AG04449 (cell line): ENCODE measurements at regions of chr12 and their contacts with region 1.

Region 1: GRCh38 chr12:6620137-6620884 is 13.1 kb upstream of the CHD4 start:
- DNase-seq: no peak
- H3K4me3 ChIP-seq: peak overlapping the region; percentile 18; the same call in 1 of the 2 replicates
- CTCF ChIP-seq: peak; percentile 73

Region 2: GRCh38 chr12:6632026-6632983 is 12.0 kb after region 1 on chr12:
- CTCF ChIA-PET with region 1: interaction called, 34 read pairs
- POLR2A ChIA-PET with region 1: no interaction called
- DNase-seq: no peak
- H3K4me3 ChIP-seq: no peak overlapping the region
- CTCF ChIP-seq: no peak

Region 3: DNA sequence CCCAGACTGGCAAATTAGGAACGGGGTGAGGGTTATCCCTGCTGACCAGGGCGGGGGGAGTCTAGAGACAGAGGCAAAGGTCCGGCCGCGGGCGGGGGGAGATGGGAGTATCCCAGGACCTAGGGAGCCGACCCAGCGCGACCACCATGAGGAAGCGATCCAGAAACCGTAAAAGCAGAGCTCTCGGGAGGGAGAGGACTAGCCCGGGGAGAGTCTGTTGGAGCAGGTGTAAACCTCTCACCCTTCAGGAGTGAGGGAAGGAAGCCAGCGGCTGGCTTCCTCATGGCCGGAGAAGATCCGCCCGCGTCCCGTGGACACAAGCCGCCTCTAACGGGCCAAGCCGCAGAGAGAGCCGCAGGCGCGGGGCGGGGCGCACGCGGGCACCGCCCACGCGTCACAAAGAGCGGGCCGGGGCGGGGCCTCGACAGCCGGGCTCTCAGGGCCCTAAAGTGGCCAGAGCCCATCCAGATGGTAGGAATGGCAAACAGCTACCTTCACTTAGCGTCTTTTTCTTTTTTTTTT is 26.8 kb after region 1 on chr12 and contains the start of gene ACRBP:
- CTCF ChIA-PET with region 1: interaction called, 24 read pairs
- POLR2A ChIA-PET with region 1: no interaction called
- DNase-seq: no peak
- H3K4me3 ChIP-seq: peak within 1 kb of the TSS; percentile 37
- CTCF ChIP-seq: no peak